ENCODE measurements at regions of chr6 and their contacts with region 1.

Region 1: GRCh38 chr6:26270903-26271667 is 93.9 kb upstream of the BTN3A2 start:
- DNase-seq: peak; percentile 59
- H3K4me3 ChIP-seq: peak overlapping the region in 1 of 2 donors; percentile 36
- H3K27ac ChIP-seq: peak overlapping the region; percentile 86 to 89
- H3K4me1 ChIP-seq: no peaks in the 10 kb centered on the region
- H3K27me3 ChIP-seq: no peaks in the 10 kb centered on the region
- CTCF ChIP-seq: no peak
- POLR2A ChIP-seq: peak; percentile 19

Region 2: GRCh38 chr6:26223650-26224546 is 47.2 kb before region 1 on chr6:
- intact Hi-C with region 1: loop called (anchors 5 kb)
- DNase-seq: peak; percentile 84
- H3K4me3 ChIP-seq: peak overlapping the region; percentile 41 to 50
- H3K27ac ChIP-seq: peak overlapping the region; percentile 87 to 88
- H3K4me1 ChIP-seq: no peaks in the 10 kb centered on the region
- H3K27me3 ChIP-seq: no peaks in the 10 kb centered on the region
- CTCF ChIP-seq: no peak
- POLR2A ChIP-seq: peak; percentile 53

Region 3: GRCh38 chr6:26230346-26230745 is 40.7 kb before region 1 on chr6:
- intact Hi-C with region 1: loop called (anchors 2 kb)
- DNase-seq: no peak
- H3K4me3 ChIP-seq: no peak overlapping the region
- H3K27ac ChIP-seq: no peak overlapping the region
- H3K4me1 ChIP-seq: no peaks in the 10 kb centered on the region
- H3K27me3 ChIP-seq: no peaks in the 10 kb centered on the region
- CTCF ChIP-seq: no peak
- POLR2A ChIP-seq: no peak